Dendritic cell treated with granulocyte-macrophage colony-stimulating factor and Interleukin-4, amounts not matched to agents 40 ng/mL and 50 ng/mL, for 4 days (primary cell): ENCODE measurements at regions of chr17 and their contacts with region 1.

Region 1: GRCh38 chr17:37592291-37592690 is 16.9 kb downstream of the SYNRG start:
- H3K4me3 Mint-ChIP-seq: no peak overlapping the region
- H3K27ac Mint-ChIP-seq: no peak overlapping the region
- H3K4me1 Mint-ChIP-seq: no peaks in the 10 kb centered on the region
- H3K27me3 Mint-ChIP-seq: no peaks in the 10 kb centered on the region

Region 2: GRCh38 chr17:37541880-37542660 is 50.2 kb before region 1 on chr17:
- intact Hi-C with region 1: loop called (anchors 5 kb)
- H3K4me3 Mint-ChIP-seq: no peak overlapping the region
- H3K27ac Mint-ChIP-seq: no peak overlapping the region
- H3K4me1 Mint-ChIP-seq: no peaks in the 10 kb centered on the region
- H3K27me3 Mint-ChIP-seq: no peaks in the 10 kb centered on the region